Caco-2 (cell line): ENCODE measurements at regions of chr10 and their contacts with region 1.

Region 1: DNA sequence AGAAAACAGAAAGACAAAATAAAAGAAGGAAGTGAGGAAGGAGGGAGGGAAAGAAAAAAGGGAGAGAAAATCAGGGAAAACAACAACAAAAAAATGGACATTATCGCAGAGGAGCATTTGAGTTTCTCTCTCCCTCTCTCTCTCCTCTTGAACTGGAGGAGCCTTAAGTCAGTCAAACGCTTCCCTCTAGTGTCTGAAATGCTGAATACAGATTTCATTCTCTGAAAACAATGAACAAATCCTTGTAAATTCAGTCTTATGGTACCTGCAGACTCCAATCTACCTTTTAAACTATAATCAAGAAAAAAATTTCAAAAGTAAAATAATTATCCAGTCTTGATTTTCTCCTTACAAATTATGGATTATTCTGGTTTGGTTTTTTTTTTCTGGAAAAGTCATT is 89.2 kb upstream of the PFKP start:
- DNase-seq: peak in 1 of 2 experiments; percentile 50
- H3K4me3 ChIP-seq: no peak overlapping the region
- H3K4me3 Mint-ChIP-seq: no peak overlapping the region
- H3K27ac Mint-ChIP-seq: no peak overlapping the region
- H3K4me1 ChIP-seq: no peaks in the 10 kb centered on the region; the same call in 1 of the 2 replicates
- H3K4me1 Mint-ChIP-seq: no peaks in the 10 kb centered on the region
- H3K27me3 ChIP-seq: no peaks in the 10 kb centered on the region
- H3K27me3 Mint-ChIP-seq: peaks cover 7% of the 10 kb centered on the region
- CTCF ChIP-seq: peak; percentile 70 to 79

Region 2: DNA sequence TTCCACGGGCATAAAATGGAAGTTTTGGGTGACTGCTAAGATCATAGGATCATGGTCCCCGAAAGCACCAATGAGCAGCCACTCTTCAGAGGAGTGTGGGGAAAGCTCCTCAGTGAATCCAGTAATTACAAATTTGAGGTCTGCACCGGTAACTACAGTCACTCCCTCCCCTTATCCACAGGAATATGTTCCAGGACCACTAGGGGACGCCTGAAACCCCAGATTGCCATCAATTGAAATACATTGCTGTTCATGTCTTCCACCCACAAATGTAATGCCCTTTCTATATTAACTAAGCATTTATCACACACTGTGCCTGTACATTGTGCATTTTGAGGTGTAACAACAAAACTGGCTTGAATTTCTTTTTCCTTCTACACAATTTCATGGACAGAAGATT is 358.6 kb before region 1 on chr10:
- CTCF ChIA-PET with region 1: no interaction called
- POLR2A ChIA-PET with region 1: no interaction called
- intact Hi-C with region 1: loop called (anchors 10 kb)
- DNase-seq: peak in 1 of 2 experiments; percentile 49
- H3K4me3 ChIP-seq: no peak overlapping the region
- H3K4me3 Mint-ChIP-seq: no peak overlapping the region
- H3K27ac Mint-ChIP-seq: no peak overlapping the region
- H3K4me1 ChIP-seq: no peaks in the 10 kb centered on the region
- H3K4me1 Mint-ChIP-seq: no peaks in the 10 kb centered on the region
- H3K27me3 ChIP-seq: no peaks in the 10 kb centered on the region
- H3K27me3 Mint-ChIP-seq: peaks cover 22% of the 10 kb centered on the region
- CTCF ChIP-seq: peak; percentile 72 to 86

Region 3: DNA sequence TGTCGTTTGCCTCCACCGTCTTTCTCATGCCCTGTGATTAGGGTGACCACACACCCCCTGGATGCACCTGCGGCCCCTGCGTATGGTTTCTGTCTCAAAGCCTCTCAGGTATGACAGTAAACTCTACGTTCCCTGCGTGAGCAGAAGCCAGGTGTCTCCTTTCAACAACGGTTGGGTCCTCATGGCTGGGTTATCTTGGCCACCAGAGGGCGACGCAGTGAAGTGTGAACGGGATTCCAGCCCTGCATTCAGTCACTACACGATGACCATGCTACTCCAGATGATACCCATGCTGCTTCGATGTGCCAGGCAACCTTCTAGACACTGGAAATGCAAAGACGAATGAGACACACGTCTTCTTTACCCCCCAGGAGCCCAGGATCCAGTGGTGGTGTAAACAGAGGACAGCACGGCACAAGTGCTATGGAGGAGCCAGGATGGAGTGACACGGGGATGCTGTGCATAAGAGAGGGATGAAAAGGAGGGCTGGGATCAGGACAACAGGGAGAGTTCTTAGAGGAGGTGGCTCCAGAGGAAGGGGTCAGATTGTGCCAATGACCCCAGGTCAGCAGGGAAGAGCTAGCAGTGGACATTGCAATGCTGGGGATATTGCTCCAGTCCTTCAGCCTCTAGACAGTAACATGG is 138.9 kb before region 1 on chr10:
- CTCF ChIA-PET with region 1: no interaction called
- POLR2A ChIA-PET with region 1: no interaction called
- intact Hi-C with region 1: loop called (anchors 1 kb)
- DNase-seq: peak; percentile 66 to 72
- H3K4me3 ChIP-seq: no peak overlapping the region
- H3K4me3 Mint-ChIP-seq: no peak overlapping the region
- H3K27ac Mint-ChIP-seq: no peak overlapping the region
- H3K4me1 ChIP-seq: no peaks in the 10 kb centered on the region
- H3K4me1 Mint-ChIP-seq: no peaks in the 10 kb centered on the region
- H3K27me3 ChIP-seq: no peaks in the 10 kb centered on the region; the same call in 1 of the 2 replicates
- H3K27me3 Mint-ChIP-seq: peaks cover 37% of the 10 kb centered on the region
- CTCF ChIP-seq: peak; percentile 73 to 93

Region 4: DNA sequence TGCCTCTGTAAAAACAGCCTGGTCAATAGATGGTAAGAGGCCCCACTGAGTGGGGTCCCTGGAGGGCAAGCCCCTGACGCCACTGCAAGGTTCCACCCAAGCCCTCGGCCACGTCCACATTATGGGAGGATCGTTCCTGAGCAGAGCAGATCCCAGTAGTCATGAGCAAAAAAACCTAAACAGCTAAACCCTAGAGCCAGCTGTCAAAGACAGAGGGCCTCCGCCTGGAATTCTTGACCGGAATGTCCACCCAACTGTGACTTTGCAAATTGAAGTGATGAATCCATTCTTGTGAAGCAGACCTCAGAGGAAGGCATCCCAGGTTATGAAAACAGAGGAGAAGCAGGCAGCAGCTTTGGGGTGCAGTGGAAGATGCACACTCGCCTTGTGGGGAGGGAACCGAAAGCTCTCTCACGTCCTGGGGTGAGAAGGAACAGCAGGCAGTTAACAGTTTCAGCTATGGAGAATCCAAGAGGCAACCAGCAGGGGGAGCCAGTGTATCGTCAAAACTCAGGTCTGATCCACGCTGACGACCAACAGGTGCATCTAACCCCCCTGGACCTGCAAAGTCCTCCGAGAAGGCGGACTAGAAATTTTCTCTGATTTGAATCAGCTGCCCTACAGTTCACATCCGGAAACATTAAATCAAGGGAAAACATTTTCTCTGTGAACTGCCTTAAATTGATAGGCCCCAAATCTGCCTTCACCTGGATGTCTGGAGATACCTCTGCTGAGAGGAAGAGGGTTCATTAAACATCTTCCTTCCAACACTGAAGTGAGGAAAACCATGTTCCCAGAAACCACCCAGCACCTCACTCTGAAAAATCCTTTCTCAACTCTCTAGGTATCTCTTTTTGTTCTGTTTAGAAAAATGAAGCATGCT is 49.9 kb before region 1 on chr10:
- CTCF ChIA-PET with region 1: no interaction called
- POLR2A ChIA-PET with region 1: no interaction called
- intact Hi-C with region 1: loop called (anchors 1 kb)
- DNase-seq: peak; percentile 75 to 82
- H3K4me3 ChIP-seq: no peak overlapping the region
- H3K4me3 Mint-ChIP-seq: no peak overlapping the region
- H3K27ac Mint-ChIP-seq: no peak overlapping the region
- H3K4me1 ChIP-seq: no peaks in the 10 kb centered on the region
- H3K4me1 Mint-ChIP-seq: no peaks in the 10 kb centered on the region
- H3K27me3 ChIP-seq: no peaks in the 10 kb centered on the region
- H3K27me3 Mint-ChIP-seq: peaks cover 14% of the 10 kb centered on the region
- CTCF ChIP-seq: peak; percentile 82

Region 5: GRCh38 chr10:2938869-2939268 is 39.2 kb before region 1 on chr10:
- CTCF ChIA-PET with region 1: no interaction called
- POLR2A ChIA-PET with region 1: no interaction called
- intact Hi-C with region 1: loop called (anchors 1 kb)
- DNase-seq: no peak
- H3K4me3 ChIP-seq: no peak overlapping the region
- H3K4me3 Mint-ChIP-seq: no peak overlapping the region
- H3K27ac Mint-ChIP-seq: no peak overlapping the region
- H3K4me1 ChIP-seq: no peaks in the 10 kb centered on the region
- H3K4me1 Mint-ChIP-seq: peaks cover under 1% of the 10 kb centered on the region
- H3K27me3 ChIP-seq: no peaks in the 10 kb centered on the region; the same call in 1 of the 2 replicates
- H3K27me3 Mint-ChIP-seq: peaks cover 40% of the 10 kb centered on the region
- CTCF ChIP-seq: no peak